CD4-positive, alpha-beta T cell (primary cell): ENCODE measurements at regions of chr21 and their contacts with region 1.

Region 1: DNA sequence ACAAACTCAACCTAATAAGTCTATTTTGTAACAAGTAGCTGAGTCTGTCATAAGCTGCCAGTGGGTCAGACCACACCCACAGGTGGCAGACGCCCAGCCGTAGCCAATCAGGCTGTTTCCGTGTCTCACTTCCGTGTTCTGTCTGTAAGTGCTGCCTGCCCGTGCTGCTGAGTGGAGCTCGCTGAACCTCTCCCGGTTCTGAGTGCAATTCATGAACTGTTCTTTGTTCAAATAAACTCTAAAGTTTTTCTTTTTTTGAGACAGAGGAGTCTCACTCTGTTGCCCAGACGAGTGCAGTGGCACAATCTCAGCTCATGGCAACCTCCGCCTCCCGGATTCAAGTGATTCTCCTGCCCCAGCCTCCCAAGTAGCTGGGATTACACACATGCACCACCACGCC is 25.1 kb downstream of the POFUT2 start:
- DNase-seq: peak in 1 of 14 experiments; percentile 40
- ATAC-seq: no peak
- H3K4me3 ChIP-seq: no peak overlapping the region
- H3K4me3 Mint-ChIP-seq: no peak overlapping the region
- H3K27ac ChIP-seq: no peak overlapping the region
- H3K27ac Mint-ChIP-seq: no peak overlapping the region
- H3K4me1 ChIP-seq: peaks cover 29% of the 10 kb centered on the region
- H3K4me1 Mint-ChIP-seq: peaks cover 15% of the 10 kb centered on the region
- H3K27me3 ChIP-seq: no peaks in the 10 kb centered on the region
- H3K27me3 Mint-ChIP-seq: no peaks in the 10 kb centered on the region
- CTCF ChIP-seq: no peak

Region 2: GRCh38 chr21:45167796-45168222 is 94.8 kb before region 1 on chr21:
- CTCF ChIA-PET with region 1: no interaction called
- POLR2A ChIA-PET with region 1: no interaction called
- intact Hi-C with region 1: no loop called
- DNase-seq: no peak
- ATAC-seq: no peak
- H3K4me3 ChIP-seq: no peak overlapping the region
- H3K4me3 Mint-ChIP-seq: no peak overlapping the region
- H3K27ac ChIP-seq: no peak overlapping the region
- H3K27ac Mint-ChIP-seq: no peak overlapping the region
- H3K4me1 ChIP-seq: peaks cover 18% of the 10 kb centered on the region
- H3K4me1 Mint-ChIP-seq: peaks cover 44% of the 10 kb centered on the region
- H3K27me3 ChIP-seq: no peaks in the 10 kb centered on the region
- H3K27me3 Mint-ChIP-seq: no peaks in the 10 kb centered on the region
- CTCF ChIP-seq: no peak

Region 3: GRCh38 chr21:45224189-45224938 is 38.3 kb before region 1 on chr21:
- CTCF ChIA-PET with region 1: no interaction called
- POLR2A ChIA-PET with region 1: no interaction called
- intact Hi-C with region 1: loop called in 1 of 2 experiments (anchors 5 kb)
- DNase-seq: peak; percentile 19 to 91 (median 62)
- ATAC-seq: peak; percentile 84
- H3K4me3 ChIP-seq: peak overlapping the region; percentile 24
- H3K4me3 Mint-ChIP-seq: peak overlapping the region; percentile 16
- H3K27ac ChIP-seq: peak overlapping the region in 1 of 2 donors; percentile 58
- H3K27ac Mint-ChIP-seq: peak overlapping the region; percentile 77
- H3K4me1 ChIP-seq: peaks cover 47% of the 10 kb centered on the region
- H3K4me1 Mint-ChIP-seq: peaks cover 46% of the 10 kb centered on the region
- H3K27me3 ChIP-seq: no peaks in the 10 kb centered on the region
- H3K27me3 Mint-ChIP-seq: no peaks in the 10 kb centered on the region
- CTCF ChIP-seq: no peak